ENCODE measurements at regions of chr12 and their contacts with region 1.

Region 1: GRCh38 chr12:22443379-22444316 is 100.7 kb downstream of the C2CD5 start:
- DNase-seq: peak; percentile 20 to 86 (median 53)
- ATAC-seq: peak; percentile 99
- H3K4me3 ChIP-seq: no peak overlapping the region
- H3K4me3 Mint-ChIP-seq: no peak overlapping the region
- H3K27ac ChIP-seq: no peak overlapping the region
- H3K27ac Mint-ChIP-seq: no peak overlapping the region
- H3K4me1 ChIP-seq: peaks cover 4% of the 10 kb centered on the region
- H3K4me1 Mint-ChIP-seq: peaks cover 4% of the 10 kb centered on the region
- H3K27me3 ChIP-seq: no peaks in the 10 kb centered on the region
- H3K27me3 Mint-ChIP-seq: no peaks in the 10 kb centered on the region
- CTCF ChIP-seq: peak; percentile 77

Region 2: GRCh38 chr12:22083167-22083566 is 360.5 kb before region 1 on chr12:
- CTCF ChIA-PET with region 1: interaction called, 11 read pairs
- POLR2A ChIA-PET with region 1: no interaction called
- intact Hi-C with region 1: loop called (anchors 1 kb)
- DNase-seq: peak in 4 of 9 experiments; percentile 13 to 63 (median 44)
- ATAC-seq: peak; percentile 49
- H3K4me3 ChIP-seq: no peak overlapping the region
- H3K4me3 Mint-ChIP-seq: no peak overlapping the region
- H3K27ac ChIP-seq: no peak overlapping the region
- H3K27ac Mint-ChIP-seq: no peak overlapping the region
- H3K4me1 ChIP-seq: no peaks in the 10 kb centered on the region
- H3K4me1 Mint-ChIP-seq: no peaks in the 10 kb centered on the region
- H3K27me3 ChIP-seq: no peaks in the 10 kb centered on the region
- H3K27me3 Mint-ChIP-seq: no peaks in the 10 kb centered on the region
- CTCF ChIP-seq: peak; percentile 47

Region 3: GRCh38 chr12:22088886-22089285 is 354.8 kb before region 1 on chr12:
- CTCF ChIA-PET with region 1: interaction called, 11 read pairs
- POLR2A ChIA-PET with region 1: no interaction called
- intact Hi-C with region 1: no loop called
- DNase-seq: no peak
- ATAC-seq: no peak
- H3K4me3 ChIP-seq: no peak overlapping the region
- H3K4me3 Mint-ChIP-seq: no peak overlapping the region
- H3K27ac ChIP-seq: no peak overlapping the region
- H3K27ac Mint-ChIP-seq: no peak overlapping the region
- H3K4me1 ChIP-seq: no peaks in the 10 kb centered on the region
- H3K4me1 Mint-ChIP-seq: no peaks in the 10 kb centered on the region
- H3K27me3 ChIP-seq: no peaks in the 10 kb centered on the region
- H3K27me3 Mint-ChIP-seq: no peaks in the 10 kb centered on the region
- CTCF ChIP-seq: no peak

Region 4: DNA sequence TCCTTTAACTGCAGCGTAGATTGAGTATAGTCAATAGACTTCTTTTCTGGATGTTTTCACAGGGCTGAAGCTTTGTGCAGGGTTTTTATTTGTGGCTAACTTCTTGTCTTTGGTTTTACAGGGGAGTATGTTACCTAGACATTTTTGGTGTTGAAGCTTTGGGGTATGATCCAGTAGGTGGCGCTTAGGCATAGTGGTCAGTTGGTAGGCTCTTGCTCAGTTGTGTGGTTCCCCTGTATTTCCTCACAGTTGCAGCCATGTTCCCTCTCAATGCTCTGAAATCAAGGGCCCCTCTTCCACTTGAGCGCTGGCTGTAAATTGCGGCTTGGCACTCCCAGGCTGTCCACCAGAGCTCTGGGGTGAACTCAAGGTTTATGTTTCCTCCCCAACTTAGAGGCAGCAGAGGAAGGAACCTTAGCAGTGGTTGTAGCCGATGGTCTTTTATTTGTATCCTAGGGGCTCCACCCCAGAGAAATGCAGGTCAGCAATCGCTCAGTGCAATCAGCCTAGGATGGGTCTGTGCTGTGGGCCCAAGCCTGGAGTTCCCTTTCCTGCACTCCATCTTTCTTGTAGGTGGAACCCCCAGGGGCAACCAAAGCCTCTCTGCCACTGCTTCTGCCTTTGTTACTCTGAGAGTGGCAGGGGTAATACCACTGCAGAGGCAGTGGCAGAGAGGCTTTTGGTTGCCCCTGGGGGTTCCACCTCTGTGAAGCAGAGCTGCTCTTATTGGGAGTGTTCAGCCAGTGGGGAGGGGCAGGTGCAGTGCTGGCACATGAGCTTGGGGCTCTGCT is 342.5 kb before region 1 on chr12:
- CTCF ChIA-PET with region 1: interaction called, 25 read pairs
- POLR2A ChIA-PET with region 1: no interaction called
- intact Hi-C with region 1: loop called in 1 of 2 experiments (anchors 1 kb)
- DNase-seq: peak in 7 of 9 experiments; percentile 8 to 75 (median 31)
- ATAC-seq: peak; percentile 51
- H3K4me3 ChIP-seq: no peak overlapping the region
- H3K4me3 Mint-ChIP-seq: no peak overlapping the region
- H3K27ac ChIP-seq: no peak overlapping the region
- H3K27ac Mint-ChIP-seq: no peak overlapping the region
- H3K4me1 ChIP-seq: peaks cover 4% of the 10 kb centered on the region
- H3K4me1 Mint-ChIP-seq: peaks cover 3% of the 10 kb centered on the region
- H3K27me3 ChIP-seq: no peaks in the 10 kb centered on the region
- H3K27me3 Mint-ChIP-seq: no peaks in the 10 kb centered on the region
- CTCF ChIP-seq: no peak

Region 5: GRCh38 chr12:22409377-22410164 is 34.1 kb before region 1 on chr12:
- CTCF ChIA-PET with region 1: interaction called, 4 read pairs
- POLR2A ChIA-PET with region 1: no interaction called
- intact Hi-C with region 1: loop called in 1 of 2 experiments (anchors 2 kb)
- DNase-seq: peak in 8 of 9 experiments; percentile 19 to 92 (median 53)
- ATAC-seq: peak; percentile 84
- H3K4me3 ChIP-seq: peak overlapping the region in 1 of 2 experiments; percentile 56
- H3K4me3 Mint-ChIP-seq: peak overlapping the region; percentile 81
- H3K27ac ChIP-seq: peak overlapping the region; percentile 27 to 78
- H3K27ac Mint-ChIP-seq: peak overlapping the region; percentile 95
- H3K4me1 ChIP-seq: peaks cover 7% of the 10 kb centered on the region
- H3K4me1 Mint-ChIP-seq: peaks cover 30% of the 10 kb centered on the region
- H3K27me3 ChIP-seq: no peaks in the 10 kb centered on the region
- H3K27me3 Mint-ChIP-seq: no peaks in the 10 kb centered on the region
- CTCF ChIP-seq: no peak